ENCODE measurements at regions of chr9 and their contacts with region 1.

Region 1: DNA sequence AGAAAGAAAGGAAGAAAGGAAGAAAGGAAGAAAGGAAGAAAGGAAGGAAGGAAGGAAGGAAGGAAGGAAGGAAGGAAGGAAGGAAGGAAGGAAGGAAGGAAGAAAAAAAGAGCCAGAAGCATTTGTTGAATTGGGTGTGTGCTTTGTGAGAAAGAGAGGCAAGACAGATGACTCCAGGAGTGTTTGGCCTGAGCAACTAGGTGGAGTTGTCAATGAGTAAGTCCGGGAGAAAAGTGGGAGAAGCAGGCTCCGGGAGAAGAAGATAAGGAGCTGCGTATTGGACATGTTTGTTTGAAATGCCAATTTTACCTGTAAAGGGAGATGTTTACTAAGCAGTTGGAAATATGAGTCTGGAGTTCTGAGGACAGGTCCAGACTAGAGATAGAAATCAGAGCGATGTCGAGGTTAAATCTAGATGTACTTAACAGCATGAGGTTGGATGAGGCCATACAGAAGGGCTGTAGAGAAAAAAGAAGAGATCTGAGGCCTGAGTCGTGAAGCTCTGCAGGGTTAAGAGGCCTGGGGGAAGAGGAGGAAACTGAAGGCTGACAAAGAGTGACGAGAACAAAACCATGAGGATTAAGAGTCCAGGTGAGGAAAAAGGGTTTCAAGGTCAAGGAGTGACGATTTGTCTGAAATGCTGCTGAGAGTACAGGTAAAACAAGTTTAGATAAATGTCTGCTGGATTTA is 14.9 kb upstream of the GCNT1 start:
- DNase-seq: no peak
- H3K4me3 ChIP-seq: no peak overlapping the region
- H3K27ac ChIP-seq: no peak overlapping the region
- H3K4me1 ChIP-seq: peaks cover 0 to 3% (median 0%) of the 10 kb centered on the region in 4 experiments; a peak in 1 of 7 replicates
- H3K27me3 ChIP-seq: no peaks in the 10 kb centered on the region
- CTCF ChIP-seq: no peak
- EP300 ChIP-seq: no peak
- POLR2A ChIP-seq: no peak
- RAD21 ChIP-seq: no peak

Region 2: DNA sequence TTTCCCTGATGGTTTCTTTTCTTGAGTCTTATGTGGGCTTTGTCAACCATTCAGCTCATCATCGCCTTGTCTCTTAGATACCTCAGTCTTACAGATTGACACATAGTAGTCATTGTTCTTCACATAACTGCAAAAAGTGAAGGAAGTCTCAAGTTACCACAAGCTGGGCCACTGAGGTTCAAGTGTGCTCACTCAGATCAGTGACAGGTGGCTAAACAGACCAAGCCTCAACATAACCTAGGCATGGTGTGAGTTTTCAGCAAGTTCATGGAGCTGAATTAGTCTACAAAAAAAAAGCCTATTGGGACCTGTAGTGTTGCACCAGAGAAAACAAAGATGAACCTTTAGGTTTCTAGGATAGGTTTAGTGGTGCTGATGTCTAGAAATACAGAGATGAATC is 108.0 kb before region 1 on chr9:
- CTCF ChIA-PET with region 1: no interaction called
- POLR2A ChIA-PET with region 1: no interaction called
- DNase-seq: no peak
- H3K4me3 ChIP-seq: no peak overlapping the region
- H3K27ac ChIP-seq: no peak overlapping the region
- H3K4me1 ChIP-seq: no peaks in the 10 kb centered on the region
- H3K27me3 ChIP-seq: no peaks in the 10 kb centered on the region
- CTCF ChIP-seq: no peak
- EP300 ChIP-seq: no peak
- POLR2A ChIP-seq: no peak
- RAD21 ChIP-seq: no peak

Region 3: GRCh38 chr9:76456202-76456926 is 12.3 kb after region 1 on chr9:
- CTCF ChIA-PET with region 1: interaction called, 13 read pairs
- POLR2A ChIA-PET with region 1: no interaction called
- DNase-seq: no peak
- H3K4me3 ChIP-seq: no peak overlapping the region
- H3K27ac ChIP-seq: no peak overlapping the region
- H3K4me1 ChIP-seq: peaks cover 0 to 15% (median 7%) of the 10 kb centered on the region in 4 experiments; a peak in 5 of 7 replicates
- H3K27me3 ChIP-seq: peaks cover 0 to 9% (median 4%) of the 10 kb centered on the region in 4 experiments; a peak in 6 of 7 replicates
- CTCF ChIP-seq: no peak
- EP300 ChIP-seq: no peak
- POLR2A ChIP-seq: no peak
- RAD21 ChIP-seq: no peak

Region 4: GRCh38 chr9:76658535-76659231 is 214.6 kb after region 1 on chr9:
- CTCF ChIA-PET with region 1: interaction called, 49 read pairs
- POLR2A ChIA-PET with region 1: no interaction called
- DNase-seq: no peak
- H3K4me3 ChIP-seq: no peak overlapping the region; a peak in 1 of 8 replicates
- H3K27ac ChIP-seq: no peak overlapping the region
- H3K4me1 ChIP-seq: peaks cover 0 to 5% (median 1%) of the 10 kb centered on the region in 4 experiments; a peak in 3 of 7 replicates
- H3K27me3 ChIP-seq: no peaks in the 10 kb centered on the region
- CTCF ChIP-seq: peak in 2 of 3 experiments; percentile 60 to 69; a peak in 3 of 4 replicates
- EP300 ChIP-seq: no peak
- POLR2A ChIP-seq: no peak
- RAD21 ChIP-seq: peak; percentile 91

Measured in H1 (cell line).